ENCODE measurements at regions of chr4 and their contacts with region 1.

Region 1: GRCh38 chr4:74675673-74676279 is 118.5 kb downstream of the BTC start:
- DNase-seq: peak; percentile 61
- ATAC-seq: peak; percentile 91
- H3K4me3 ChIP-seq: no peak overlapping the region
- H3K27ac ChIP-seq: no peak overlapping the region
- H3K4me1 ChIP-seq: no peaks in the 10 kb centered on the region
- H3K27me3 ChIP-seq: no peaks in the 10 kb centered on the region
- CTCF ChIP-seq: peak; percentile 84
- EP300 ChIP-seq: no peak
- POLR2A ChIP-seq: no peak
- RAD21 ChIP-seq: peak; percentile 75

Region 2: DNA sequence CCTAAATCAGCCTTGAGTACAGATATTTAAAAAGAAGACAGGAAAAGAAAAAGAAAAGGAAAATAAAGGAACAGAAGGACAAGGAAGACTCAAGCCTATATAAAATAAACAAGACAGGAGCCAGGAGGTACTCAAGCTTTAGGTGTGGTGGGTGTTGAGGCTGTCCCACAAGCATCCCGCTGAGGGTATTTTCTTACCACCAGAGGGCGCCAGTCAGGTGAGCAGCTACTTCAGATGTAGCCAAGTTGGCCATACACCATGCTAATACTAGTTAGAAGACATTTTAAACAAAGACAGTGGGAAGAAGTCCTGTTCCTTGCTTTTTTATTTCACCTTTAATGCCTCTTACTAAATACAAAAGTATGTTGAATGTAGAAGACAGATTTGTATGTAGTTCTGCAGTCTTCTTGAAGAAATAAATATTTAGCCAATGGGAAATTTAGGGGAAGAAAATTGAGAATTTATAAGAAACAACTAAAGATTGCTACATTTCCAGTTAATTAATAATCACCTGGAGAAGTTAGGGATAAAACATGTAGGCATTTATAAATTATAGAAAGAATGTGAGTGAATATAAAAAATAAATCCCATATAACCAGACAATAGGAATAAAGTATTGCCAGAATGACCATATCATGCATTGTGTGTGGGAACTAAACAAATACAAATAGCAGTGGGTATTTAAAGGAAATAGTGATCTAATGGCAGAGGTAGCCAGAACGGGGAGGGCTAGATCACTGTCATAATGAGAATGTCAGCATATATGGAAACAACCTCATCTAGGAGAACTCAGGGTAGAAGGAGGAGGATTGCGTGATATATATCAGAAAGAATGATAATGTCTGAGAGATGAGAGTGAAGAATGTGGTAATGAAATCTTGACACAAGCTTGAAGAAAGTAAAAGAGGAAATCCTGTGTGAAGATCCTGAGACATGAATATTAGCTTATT is 446.8 kb before region 1 on chr4:
- CTCF ChIA-PET with region 1: interaction called, 11 read pairs
- POLR2A ChIA-PET with region 1: no interaction called
- in situ Hi-C with region 1: no loop called
- intact Hi-C with region 1: loop called (anchors 1 kb)
- DNase-seq: peak; percentile 58
- ATAC-seq: peak; percentile 90
- H3K4me3 ChIP-seq: no peak overlapping the region
- H3K27ac ChIP-seq: no peak overlapping the region
- H3K4me1 ChIP-seq: no peaks in the 10 kb centered on the region
- H3K27me3 ChIP-seq: no peaks in the 10 kb centered on the region
- CTCF ChIP-seq: peak; percentile 74
- EP300 ChIP-seq: no peak
- POLR2A ChIP-seq: no peak
- RAD21 ChIP-seq: no peak

Region 3: GRCh38 chr4:74370912-74371311 is 304.9 kb before region 1 on chr4:
- CTCF ChIA-PET with region 1: interaction called, 36 read pairs
- POLR2A ChIA-PET with region 1: no interaction called
- in situ Hi-C with region 1: loop called (anchors 5 kb)
- intact Hi-C with region 1: loop called (anchors 1 kb)
- DNase-seq: peak; percentile 65
- ATAC-seq: peak; percentile 99
- H3K4me3 ChIP-seq: no peak overlapping the region
- H3K27ac ChIP-seq: no peak overlapping the region
- H3K4me1 ChIP-seq: no peaks in the 10 kb centered on the region
- H3K27me3 ChIP-seq: 0 out of 5 replicates have a peak, but pooled peaks cover 0 to 3% of the 10 kb centered on the region in 2 experiments
- CTCF ChIP-seq: peak; percentile 74
- EP300 ChIP-seq: no peak
- POLR2A ChIP-seq: no peak
- RAD21 ChIP-seq: peak; percentile 66

Region 4: GRCh38 chr4:74490736-74491135 is 185.0 kb before region 1 on chr4:
- CTCF ChIA-PET with region 1: no interaction called
- POLR2A ChIA-PET with region 1: no interaction called
- in situ Hi-C with region 1: no loop called
- intact Hi-C with region 1: no loop called
- DNase-seq: no peak
- ATAC-seq: no peak
- H3K4me3 ChIP-seq: no peak overlapping the region
- H3K27ac ChIP-seq: no peak overlapping the region
- H3K4me1 ChIP-seq: no peaks in the 10 kb centered on the region
- H3K27me3 ChIP-seq: no peaks in the 10 kb centered on the region; a peak in 1 of 5 replicates
- CTCF ChIP-seq: no peak
- EP300 ChIP-seq: no peak
- POLR2A ChIP-seq: no peak
- RAD21 ChIP-seq: no peak

Region 5: GRCh38 chr4:74531963-74532794 is 143.6 kb before region 1 on chr4:
- CTCF ChIA-PET with region 1: interaction called, 10 read pairs
- POLR2A ChIA-PET with region 1: interaction called, 3 read pairs
- in situ Hi-C with region 1: loop called (anchors 10 kb)
- intact Hi-C with region 1: loop called (anchors 2 kb)
- DNase-seq: peak; percentile 75
- ATAC-seq: peak; percentile 93
- H3K4me3 ChIP-seq: no peak overlapping the region
- H3K27ac ChIP-seq: no peak overlapping the region
- H3K4me1 ChIP-seq: peaks cover 6% of the 10 kb centered on the region; the same call in 1 of the 2 replicates
- H3K27me3 ChIP-seq: no peaks in the 10 kb centered on the region
- CTCF ChIP-seq: peak; percentile 75
- EP300 ChIP-seq: no peak
- POLR2A ChIP-seq: no peak
- RAD21 ChIP-seq: no peak